ENCODE measurements at regions of chr10 and their contacts with region 1.

Region 1: DNA sequence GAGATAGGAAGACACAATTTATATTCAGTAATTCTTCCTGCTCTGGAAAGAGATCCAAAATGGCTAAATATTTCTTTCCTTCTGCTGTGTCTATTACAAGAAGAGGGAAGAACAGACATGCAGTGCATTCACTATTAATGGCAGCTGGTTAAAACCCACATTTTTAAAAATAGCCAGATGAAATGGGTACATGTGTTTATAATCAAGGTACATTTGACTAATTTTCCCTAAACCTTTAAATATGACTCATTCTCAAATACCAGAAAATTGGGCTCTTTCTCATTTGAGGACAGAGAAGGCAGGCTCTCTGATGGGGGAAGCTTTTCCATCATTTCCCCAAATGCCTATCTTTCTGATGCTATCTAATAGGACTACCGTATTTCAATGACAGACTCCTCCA is 215.7 kb upstream of the HABP2 start:
- DNase-seq: no peak

Region 2: DNA sequence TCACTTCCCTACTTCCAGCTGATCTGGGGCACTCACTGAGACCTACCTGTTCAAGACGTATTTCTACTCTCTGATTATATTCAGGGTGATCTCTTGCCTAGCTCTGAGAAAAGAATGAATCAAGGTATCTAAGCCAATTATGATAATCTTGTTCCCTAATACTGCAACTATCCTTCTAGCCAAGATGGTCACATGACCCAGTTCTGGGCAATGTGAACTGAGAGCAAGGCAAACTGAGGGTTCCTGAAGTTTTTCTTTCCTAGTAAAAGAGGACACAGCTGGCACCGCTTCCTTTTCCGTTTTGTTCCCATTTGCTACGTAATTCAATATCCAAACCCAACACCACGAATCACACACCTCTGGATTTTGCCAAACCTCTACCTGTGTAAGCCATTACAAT is 1147.7 kb before region 1 on chr10:
- intact Hi-C with region 1: no loop called
- DNase-seq: no peak

Region 3: GRCh38 chr10:113297226-113297625 is 39.9 kb before region 1 on chr10:
- intact Hi-C with region 1: no loop called
- DNase-seq: no peak

Region 4: GRCh38 chr10:113369365-113369694 is 32.2 kb after region 1 on chr10:
- intact Hi-C with region 1: loop called in 1 of 2 experiments (anchors 2 kb)
- DNase-seq: no peak

Measured in posterior vena cava (tissue), 2 donors.